CD4-positive, alpha-beta T cell (primary cell): ENCODE measurements at regions of chr7 and their contacts with region 1.

Region 1: GRCh38 chr7:101507791-101508252 is 121.3 kb downstream of the MYL10 start:
- DNase-seq: peak in 7 of 14 experiments; percentile 1 to 56 (median 30)
- ATAC-seq: no peak
- H3K4me3 ChIP-seq: no peak overlapping the region
- H3K4me3 Mint-ChIP-seq: no peak overlapping the region
- H3K27ac ChIP-seq: no peak overlapping the region
- H3K27ac Mint-ChIP-seq: no peak overlapping the region
- H3K4me1 ChIP-seq: peaks cover 4% of the 10 kb centered on the region
- H3K4me1 Mint-ChIP-seq: peaks cover 4% of the 10 kb centered on the region
- H3K27me3 ChIP-seq: peaks cover 0 to 3% of the 10 kb centered on the region in 2 experiments
- H3K27me3 Mint-ChIP-seq: peaks cover 10% of the 10 kb centered on the region
- CTCF ChIP-seq: peak; percentile 59

Region 2: DNA sequence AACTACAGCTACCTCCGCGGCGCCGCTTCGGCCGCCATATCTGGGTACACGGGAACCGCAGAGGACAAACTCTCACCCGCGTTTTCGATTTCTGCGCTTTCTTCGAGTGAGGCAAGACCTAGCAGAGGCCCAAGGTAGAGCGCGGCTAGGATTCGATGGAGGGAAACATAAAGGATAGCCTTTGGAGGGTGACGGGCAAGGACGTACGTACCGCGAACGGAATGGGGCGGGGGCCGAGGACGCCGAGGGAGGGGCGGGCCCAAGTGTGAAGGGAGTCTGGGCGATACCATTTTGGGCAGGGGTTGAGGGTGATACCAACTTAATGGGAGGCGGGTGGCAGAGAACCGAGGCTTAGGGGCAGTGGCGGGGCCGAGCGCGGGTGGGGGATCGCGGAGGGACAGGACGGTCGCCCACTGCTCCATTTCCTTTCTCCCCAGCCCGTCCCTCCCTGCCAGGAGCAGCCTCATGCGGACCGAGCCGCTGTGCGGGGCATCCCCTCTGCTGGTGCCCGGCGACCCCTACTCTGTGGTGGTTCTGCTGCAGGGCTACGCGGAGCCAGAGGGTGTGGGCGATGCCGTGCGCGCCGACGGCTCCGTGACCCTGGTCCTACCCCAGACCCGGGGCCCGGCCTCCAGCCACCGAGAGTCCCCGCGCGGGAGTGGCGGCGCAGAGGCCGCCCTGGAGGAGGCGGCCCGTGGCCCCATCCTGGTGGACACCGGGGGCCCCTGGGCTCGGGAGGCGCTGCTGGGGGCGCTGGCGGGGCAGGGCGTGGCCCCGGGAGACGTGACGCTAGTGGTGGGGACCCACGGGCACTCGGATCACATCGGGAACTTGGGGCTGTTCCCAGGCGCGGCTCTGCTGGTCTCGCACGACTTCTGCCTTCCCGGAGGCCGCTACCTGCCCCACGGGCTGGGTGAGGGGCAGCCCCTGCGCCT is 1380.6 kb before region 1 on chr7 and contains the start of gene MBLAC1:
- CTCF ChIA-PET with region 1: no interaction called
- POLR2A ChIA-PET with region 1: no interaction called
- intact Hi-C with region 1: no loop called
- DNase-seq: peak; percentile 87 to 97 (median 91)
- ATAC-seq: peak; percentile 80
- H3K4me3 ChIP-seq: peak within 1 kb of the TSS; percentile 96
- H3K4me3 Mint-ChIP-seq: peak within 1 kb of the TSS; percentile 100
- H3K27ac ChIP-seq: peak within 1 kb of the TSS; percentile 96 to 99
- H3K27ac Mint-ChIP-seq: peak within 1 kb of the TSS; percentile 100
- H3K4me1 ChIP-seq: peaks cover 39% of the 10 kb centered on the region
- H3K4me1 Mint-ChIP-seq: peaks cover 31% of the 10 kb centered on the region
- H3K27me3 ChIP-seq: no peaks in the 10 kb centered on the region
- H3K27me3 Mint-ChIP-seq: no peaks in the 10 kb centered on the region
- CTCF ChIP-seq: no peak
- total RNA-seq, gene MBLAC1: 3.7 to 4.4 TPM

Region 3: DNA sequence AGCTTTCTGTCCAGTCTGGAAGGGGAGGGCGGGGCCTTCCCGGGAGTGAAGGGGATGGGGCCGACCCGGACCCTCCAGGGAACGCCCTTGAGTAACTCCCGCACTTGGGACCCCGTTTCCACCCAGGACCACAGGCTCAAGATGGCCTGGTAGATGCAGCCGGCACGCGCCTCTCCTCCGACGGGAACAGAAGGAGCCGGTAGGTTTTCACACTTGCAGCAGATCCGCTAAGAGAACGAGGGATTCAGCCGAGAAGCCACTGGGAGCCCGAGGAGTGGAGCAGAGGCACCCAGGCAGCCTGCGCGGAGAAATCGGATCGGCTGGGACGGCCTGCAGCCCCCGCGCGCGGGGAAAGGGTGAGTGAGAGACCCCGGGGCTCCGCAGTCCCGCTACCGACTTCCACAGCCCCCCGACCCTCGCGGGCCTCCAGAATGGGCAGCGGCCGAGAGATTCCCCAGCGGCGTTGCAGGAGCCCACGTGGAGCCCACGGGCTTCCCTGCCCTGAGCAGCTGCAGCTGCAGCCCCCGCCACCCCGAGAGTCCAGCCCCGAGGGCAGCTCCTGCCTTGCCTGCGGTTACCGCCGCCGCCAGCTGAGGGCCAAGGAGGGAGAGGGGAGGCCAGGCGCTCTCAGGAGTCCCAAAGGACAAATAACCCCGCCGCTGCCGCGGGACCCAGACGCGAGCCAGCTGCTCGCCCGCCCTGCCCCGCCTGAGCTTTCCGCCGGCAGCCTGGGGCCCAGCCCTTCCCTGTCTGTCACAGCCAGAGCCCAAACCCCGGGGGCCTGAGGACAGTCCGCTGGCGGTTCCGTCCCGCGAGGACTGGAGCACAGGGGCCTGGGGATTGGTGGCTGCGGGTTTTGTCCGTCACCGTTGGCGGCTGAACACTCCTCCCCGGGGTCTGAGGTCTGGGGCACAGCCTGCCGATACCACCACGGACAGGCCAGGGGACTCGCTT is 208.0 kb before region 1 on chr7:
- CTCF ChIA-PET with region 1: no interaction called
- POLR2A ChIA-PET with region 1: no interaction called
- intact Hi-C with region 1: no loop called
- DNase-seq: no peak
- ATAC-seq: no peak
- H3K4me3 ChIP-seq: no peak overlapping the region
- H3K4me3 Mint-ChIP-seq: no peak overlapping the region
- H3K27ac ChIP-seq: no peak overlapping the region
- H3K27ac Mint-ChIP-seq: no peak overlapping the region
- H3K4me1 ChIP-seq: peaks cover 15% of the 10 kb centered on the region
- H3K4me1 Mint-ChIP-seq: peaks cover 5% of the 10 kb centered on the region
- H3K27me3 ChIP-seq: peaks cover 69 to 73% of the 10 kb centered on the region in 2 experiments
- H3K27me3 Mint-ChIP-seq: peaks cover 71% of the 10 kb centered on the region
- CTCF ChIP-seq: no peak

Region 4: GRCh38 chr7:101410743-101411507 is 96.9 kb before region 1 on chr7:
- CTCF ChIA-PET with region 1: no interaction called
- POLR2A ChIA-PET with region 1: no interaction called
- intact Hi-C with region 1: loop called in 1 of 2 experiments (anchors 5 kb)
- DNase-seq: peak; percentile 5 to 64 (median 21)
- ATAC-seq: no peak
- H3K4me3 ChIP-seq: no peak overlapping the region
- H3K4me3 Mint-ChIP-seq: no peak overlapping the region
- H3K27ac ChIP-seq: no peak overlapping the region
- H3K27ac Mint-ChIP-seq: no peak overlapping the region
- H3K4me1 ChIP-seq: peaks cover 6% of the 10 kb centered on the region
- H3K4me1 Mint-ChIP-seq: peaks cover 7% of the 10 kb centered on the region
- H3K27me3 ChIP-seq: no peaks in the 10 kb centered on the region
- H3K27me3 Mint-ChIP-seq: peaks cover 17% of the 10 kb centered on the region
- CTCF ChIP-seq: peak; percentile 90